Left cardiac atrium (tissue), 4 donors: ENCODE measurements at regions of chr10 and their contacts with region 1.

Region 1: DNA sequence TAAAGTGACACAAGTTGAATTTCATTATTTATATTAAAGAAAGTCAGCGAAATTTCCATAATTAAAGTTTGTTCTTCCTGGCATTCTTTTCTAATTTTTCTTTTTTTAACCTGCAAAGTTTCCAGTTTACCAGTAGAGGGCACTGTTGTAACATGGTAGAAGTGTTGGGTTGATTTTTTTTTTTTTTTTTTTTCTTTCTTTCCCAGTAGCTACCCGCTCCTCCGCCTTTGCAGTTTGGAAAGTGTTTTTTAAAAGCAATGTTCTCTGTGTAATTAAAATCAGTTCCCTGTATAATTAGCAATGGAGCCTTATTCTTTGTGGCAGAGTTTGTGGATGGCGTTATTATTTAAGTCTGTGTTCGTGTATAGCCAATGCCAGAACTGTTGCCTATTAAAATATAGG is 53.7 kb downstream of the TAF3 start:
- DNase-seq: no peak
- ATAC-seq: no peak

Region 2: DNA sequence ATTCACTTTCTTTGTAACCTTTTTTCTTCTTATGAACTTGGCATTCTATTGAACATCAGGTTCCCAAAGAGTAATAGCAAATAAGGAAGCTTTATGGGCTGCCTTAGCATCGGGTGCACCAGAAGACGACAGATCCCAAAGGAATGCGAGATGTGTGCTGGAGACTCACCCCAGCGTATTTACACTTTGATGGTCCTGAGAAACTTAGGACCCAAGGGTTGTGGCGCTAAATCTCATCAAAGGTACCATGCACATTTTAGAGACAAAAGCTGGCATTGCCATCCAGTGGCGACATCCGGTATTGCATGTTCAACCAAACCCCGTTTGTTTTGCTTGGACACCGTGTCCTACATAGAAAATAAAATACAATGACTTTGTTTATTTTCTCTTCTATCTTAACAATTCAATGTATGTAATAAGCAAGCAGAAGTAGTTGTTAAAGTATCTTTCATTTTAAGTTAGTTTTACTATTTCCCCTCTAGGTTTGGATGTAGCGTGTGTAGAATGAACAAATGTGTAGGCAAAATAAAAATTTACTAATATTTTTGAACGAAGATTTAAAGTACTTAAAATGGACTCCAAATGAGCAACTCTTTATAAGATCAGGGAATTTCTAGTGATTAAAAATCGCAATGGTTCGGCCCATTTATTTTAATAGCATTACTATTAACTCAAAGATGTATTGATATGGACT is 1337.2 kb after region 1 on chr10:
- intact Hi-C with region 1: loop called (anchors 2 to 10 kb)
- DNase-seq: peak; percentile 51
- ATAC-seq: peak in 1 of 2 donors; percentile 34

Region 3: GRCh38 chr10:9302120-9302746 is 1430.2 kb after region 1 on chr10:
- intact Hi-C with region 1: loop called (anchors 5 to 10 kb)
- DNase-seq: no peak
- ATAC-seq: peak in 1 of 2 donors; percentile 34